H1 (cell line): ENCODE measurements at regions of chr11 and their contacts with region 1.

Region 1: DNA sequence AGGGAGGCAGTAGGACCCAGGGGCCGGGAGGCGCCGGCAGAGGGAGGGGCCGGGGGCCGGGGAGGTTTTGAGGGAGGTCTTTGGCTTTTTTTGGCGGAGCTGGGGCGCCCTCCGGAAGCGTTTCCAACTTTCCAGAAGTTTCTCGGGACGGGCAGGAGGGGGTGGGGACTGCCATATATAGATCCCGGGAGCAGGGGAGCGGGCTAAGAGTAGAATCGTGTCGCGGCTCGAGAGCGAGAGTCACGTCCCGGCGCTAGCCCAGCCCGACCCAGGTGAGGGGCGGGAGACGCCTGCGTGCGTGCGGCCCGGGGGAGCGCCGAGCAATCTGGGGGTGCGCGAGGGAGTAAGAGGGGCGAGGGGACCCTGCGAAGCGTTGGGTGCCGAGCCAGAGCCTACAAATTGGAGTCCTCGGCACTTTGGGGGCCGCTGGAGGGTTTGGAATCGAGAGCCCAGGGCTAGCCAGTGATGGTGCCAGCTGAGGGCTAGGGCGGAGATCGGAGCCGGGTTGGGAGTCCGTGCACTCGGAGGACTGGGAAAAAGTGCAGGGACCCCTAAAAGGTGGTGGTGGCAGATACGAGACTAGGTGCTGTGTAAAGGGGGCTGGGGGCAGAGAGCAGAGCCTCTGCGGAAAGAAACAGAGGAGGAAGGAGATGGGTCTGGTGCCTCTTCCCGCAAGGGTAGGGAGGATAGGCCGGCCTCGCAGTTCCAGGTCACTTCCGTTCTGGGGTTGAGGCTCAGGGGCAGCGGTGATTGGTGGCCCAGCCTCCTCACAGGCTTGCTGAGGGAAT is at the start of gene SERPINH1:
- DNase-seq: peak in 1 of 2 experiments; percentile 83
- H3K4me3 ChIP-seq: peak within 1 kb of the TSS; percentile 62 to 93 (median 84)
- H3K27ac ChIP-seq: peak within 1 kb of the TSS; percentile 95
- H3K4me1 ChIP-seq: peaks cover 10 to 57% (median 39%) of the 10 kb centered on the region in 4 experiments
- H3K27me3 ChIP-seq: no peaks in the 10 kb centered on the region
- CTCF ChIP-seq: no peak
- EP300 ChIP-seq: no peak
- POLR2A ChIP-seq: peak; percentile 77 to 86; a peak in 2 of 3 replicates
- RAD21 ChIP-seq: no peak; a peak in 1 of 4 replicates
- total RNA-seq, gene SERPINH1: 420 and 424 TPM in 2 replicates

Region 2: DNA sequence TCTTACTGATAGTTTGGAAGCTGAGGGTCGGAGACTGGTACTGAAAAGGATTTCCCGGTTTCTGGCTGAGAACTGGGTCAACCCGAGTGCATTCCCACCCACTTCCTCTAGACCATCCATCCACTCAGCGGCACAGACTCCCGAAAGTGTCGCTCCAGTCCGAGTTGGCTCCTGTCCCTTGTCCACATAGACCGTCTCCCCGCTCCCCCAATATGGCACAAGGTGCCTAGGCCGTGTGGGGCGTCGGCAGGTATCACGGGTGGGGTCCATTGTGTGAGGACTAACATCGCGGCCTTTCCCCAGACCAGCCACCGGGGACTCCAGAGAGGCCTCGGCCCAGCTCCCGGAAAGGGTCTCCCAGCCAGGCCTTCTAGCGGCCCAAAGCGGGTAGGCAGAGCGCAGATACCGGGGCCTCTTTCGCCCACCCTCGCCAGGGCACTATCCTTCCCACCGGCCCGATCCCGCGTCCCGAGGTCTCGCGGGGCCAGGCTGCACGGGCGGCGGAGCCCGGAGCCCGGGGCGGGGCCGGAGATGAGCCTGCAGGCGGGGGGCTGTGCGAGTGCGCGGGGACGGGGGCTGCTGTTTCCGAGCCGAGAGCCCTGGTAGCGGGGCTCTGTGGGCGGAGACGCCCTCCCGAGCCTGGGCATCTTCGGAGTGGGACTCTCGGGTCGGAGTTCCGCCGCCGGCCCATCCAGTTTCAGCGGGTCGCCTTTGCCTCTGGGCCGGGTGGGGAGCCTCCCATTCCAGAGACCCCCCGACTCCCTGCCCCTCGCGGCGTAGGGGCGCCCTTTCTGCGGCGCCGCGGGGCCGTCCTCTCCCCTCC is 20.9 kb after region 1 on chr11:
- CTCF ChIA-PET with region 1: interaction called, 344 read pairs
- POLR2A ChIA-PET with region 1: interaction called, 1,120 read pairs
- DNase-seq: peak in 1 of 2 experiments; percentile 88
- H3K4me3 ChIP-seq: peak overlapping the region; percentile 58 to 77 (median 66)
- H3K27ac ChIP-seq: peak overlapping the region; percentile 50; the same call in 1 of the 2 replicates
- H3K4me1 ChIP-seq: peaks cover 2 to 17% (median 14%) of the 10 kb centered on the region in 4 experiments
- H3K27me3 ChIP-seq: no peaks in the 10 kb centered on the region
- CTCF ChIP-seq: peak in 2 of 3 experiments; percentile 25 to 39; a peak in 3 of 4 replicates
- EP300 ChIP-seq: no peak; a peak in 1 of 3 replicates
- POLR2A ChIP-seq: peak; percentile 42 to 70; a peak in 2 of 3 replicates
- RAD21 ChIP-seq: peak; percentile 1 to 16; a peak in 1 of 4 replicates